GM10248 (cell line): ENCODE measurements at regions of chr12 and their contacts with region 1.

Region 1: DNA sequence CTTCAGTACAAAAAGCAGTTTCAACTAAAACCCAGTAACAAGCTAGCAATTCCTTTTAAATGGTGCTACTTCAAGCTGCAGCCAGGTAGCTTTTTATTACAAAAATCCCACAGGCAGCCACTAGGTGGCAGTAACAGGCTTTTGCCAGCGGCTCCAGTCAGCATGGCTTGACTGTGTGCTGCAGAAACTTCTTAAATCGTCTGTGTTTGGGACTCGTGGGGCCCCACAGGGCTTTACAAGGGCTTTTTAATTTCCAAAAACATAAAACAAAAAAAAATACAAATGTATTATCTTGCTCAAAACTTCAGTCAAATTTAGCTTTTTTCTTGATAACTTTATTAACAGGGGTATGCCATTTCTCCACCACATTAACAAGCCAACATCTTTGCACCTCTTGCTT is 3.6 kb upstream of the CLEC4E start:
- DNase-seq: peak; percentile 70
- CTCF ChIP-seq: peak; percentile 82

Region 2: GRCh38 chr12:8554451-8555195 is 10.3 kb after region 1 on chr12:
- CTCF ChIA-PET with region 1: interaction called, 40 read pairs
- POLR2A ChIA-PET with region 1: no interaction called
- DNase-seq: no peak
- CTCF ChIP-seq: no peak

Region 3: DNA sequence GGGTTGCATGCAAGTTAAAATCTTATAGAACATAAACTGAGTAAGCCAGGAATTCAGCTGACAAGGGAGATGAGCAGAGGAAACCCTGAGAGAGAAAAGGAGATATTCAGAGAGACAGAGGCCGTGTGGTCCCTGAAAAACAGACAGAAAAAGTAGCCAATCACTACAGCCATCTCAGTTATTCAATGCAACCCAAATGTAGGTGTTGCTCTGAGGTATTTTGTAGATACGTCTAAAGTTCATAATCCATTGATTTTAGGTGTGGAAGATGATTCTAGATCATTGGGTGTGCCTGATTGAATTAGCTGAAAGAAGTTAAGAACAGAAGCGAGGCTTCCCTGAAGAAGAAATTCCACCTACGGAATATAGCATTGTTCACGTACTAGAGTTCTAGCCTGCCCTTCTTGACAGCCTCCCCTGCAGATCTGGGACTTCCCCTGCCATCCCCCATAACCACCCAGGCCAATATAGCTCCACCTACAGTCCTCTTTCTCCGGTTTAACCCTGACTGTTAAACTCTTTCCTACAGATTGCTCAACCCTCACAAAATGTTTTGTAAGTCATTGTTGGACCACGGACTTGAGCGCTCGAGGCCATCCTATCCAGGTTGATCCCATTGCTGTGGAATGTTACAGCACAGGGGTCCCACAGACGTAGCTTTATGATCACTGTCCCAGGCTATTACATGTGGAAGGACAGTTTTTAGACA is 46.7 kb after region 1 on chr12:
- CTCF ChIA-PET with region 1: interaction called, 31 read pairs
- POLR2A ChIA-PET with region 1: no interaction called
- DNase-seq: peak; percentile 80
- CTCF ChIP-seq: peak; percentile 34

Region 4: DNA sequence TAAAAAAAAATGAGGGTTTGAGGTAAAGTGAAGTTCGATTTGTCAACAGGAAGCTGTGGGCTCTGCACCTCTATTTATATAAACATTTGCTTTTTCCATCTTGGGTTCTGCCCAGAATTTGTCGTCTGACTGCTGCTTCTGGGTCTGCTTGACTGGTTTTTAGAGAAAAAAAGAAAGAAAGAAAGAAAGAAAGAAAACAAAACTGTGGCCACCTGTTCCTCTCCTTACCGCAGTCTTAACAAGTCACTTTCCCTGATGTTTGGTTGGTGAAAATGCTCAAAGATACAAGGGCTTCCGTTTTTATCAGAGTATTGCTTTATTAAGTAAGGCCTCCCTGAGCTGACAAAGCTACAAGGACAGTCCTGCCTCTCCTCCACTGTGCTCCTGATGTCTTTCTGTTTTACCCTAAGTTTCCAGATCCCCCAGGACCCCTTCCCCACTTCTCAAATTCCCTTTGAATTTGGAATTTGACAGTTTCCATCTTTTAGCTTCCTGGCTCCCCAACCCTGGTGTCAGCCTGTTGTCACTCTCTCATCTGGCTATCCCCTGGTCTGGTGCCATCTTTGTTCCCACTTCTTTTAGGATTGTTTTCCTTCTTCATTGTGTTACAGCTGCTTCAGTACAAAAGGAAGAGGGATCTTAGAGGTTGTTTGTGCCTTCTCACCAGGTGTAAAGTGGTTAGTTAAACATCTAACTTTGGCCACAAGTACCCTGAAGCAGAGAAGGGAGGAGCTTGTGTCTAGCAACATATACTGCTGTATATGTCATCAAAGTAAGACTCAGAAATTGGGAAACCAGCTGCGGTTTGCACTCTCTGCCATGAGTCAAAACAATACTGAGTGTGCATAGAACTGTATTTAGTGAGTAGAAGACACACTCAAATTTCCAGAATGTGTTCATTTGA is 100.3 kb after region 1 on chr12:
- CTCF ChIA-PET with region 1: interaction called, 30 read pairs
- POLR2A ChIA-PET with region 1: no interaction called
- DNase-seq: peak; percentile 63
- CTCF ChIP-seq: no peak

Region 5: GRCh38 chr12:8681041-8681902 is 137.0 kb after region 1 on chr12:
- CTCF ChIA-PET with region 1: interaction called, 12 read pairs
- POLR2A ChIA-PET with region 1: no interaction called
- DNase-seq: no peak
- CTCF ChIP-seq: no peak

Region 6: GRCh38 chr12:9049520-9050133 is 505.3 kb after region 1 on chr12:
- CTCF ChIA-PET with region 1: interaction called, 16 read pairs
- POLR2A ChIA-PET with region 1: no interaction called
- DNase-seq: peak; percentile 33
- CTCF ChIP-seq: peak; percentile 43